Thyroid gland (tissue), 4 donors: ENCODE measurements at regions of chr10 and their contacts with region 1.

Region 1: DNA sequence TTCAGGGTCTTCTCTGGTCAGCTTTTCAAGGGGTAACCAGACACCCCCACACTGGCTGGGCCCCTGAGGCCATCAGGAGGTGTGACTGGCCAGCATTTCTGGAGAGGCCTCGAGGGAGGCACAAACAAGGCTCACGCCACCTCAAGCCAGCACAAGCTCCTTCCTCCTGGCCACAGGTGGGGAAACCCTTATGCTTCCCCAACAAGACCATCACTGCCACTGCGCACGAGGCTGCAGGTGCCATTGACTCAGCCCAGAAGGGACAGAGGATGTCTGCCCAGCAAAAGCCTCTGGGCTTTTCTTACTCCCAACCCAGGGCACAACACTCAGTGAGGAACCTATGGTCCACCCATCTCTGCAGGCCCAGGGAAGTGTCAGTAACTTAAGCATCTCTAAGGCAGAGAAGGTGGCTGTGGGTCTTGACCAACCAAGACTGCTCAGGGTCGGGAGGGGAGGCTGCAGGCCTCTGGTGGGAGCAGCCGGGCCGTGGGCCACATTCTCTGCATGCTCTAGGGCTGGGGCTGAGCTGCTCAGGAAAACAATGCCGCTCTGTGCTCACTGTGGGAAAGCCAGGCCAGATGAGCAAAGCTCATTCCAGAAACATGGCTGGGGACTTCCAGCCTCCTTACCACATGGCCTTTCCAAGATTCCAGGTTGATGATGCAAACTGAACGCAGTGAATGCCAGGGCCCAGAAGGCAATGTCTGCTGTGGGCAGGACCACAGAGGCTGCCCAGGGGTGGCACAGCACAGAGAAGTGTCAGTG is 24.2 kb upstream of the RASSF4 start:
- DNase-seq: no peak
- H3K4me3 ChIP-seq: no peak overlapping the region
- H3K27ac ChIP-seq: no peak overlapping the region
- H3K4me1 ChIP-seq: peaks cover 6 to 25% of the 10 kb centered on the region in 2 donors
- H3K27me3 ChIP-seq: no peaks in the 10 kb centered on the region
- CTCF ChIP-seq: no peak
- POLR2A ChIP-seq: no peak

Region 2: DNA sequence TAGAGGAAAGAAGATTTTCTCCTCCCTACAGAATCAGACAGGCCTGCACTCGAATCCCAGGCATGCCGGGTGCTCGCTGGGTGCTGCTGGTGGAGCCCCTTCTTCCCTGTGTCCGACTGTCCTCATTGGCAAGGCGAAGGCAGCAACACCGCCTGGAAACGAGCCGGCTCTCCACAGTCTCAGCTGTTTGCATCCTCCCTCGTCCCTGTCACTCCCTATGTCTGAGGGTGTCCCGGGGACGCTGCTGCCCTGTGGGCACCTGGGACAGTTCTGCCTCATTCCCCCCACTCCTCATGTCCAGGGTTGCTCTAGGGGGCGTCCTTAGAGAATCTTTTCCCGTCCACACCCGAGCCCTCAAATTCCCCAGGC is 55.9 kb before region 1 on chr10:
- intact Hi-C with region 1: no loop called
- DNase-seq: no peak
- H3K4me3 ChIP-seq: no peak overlapping the region
- H3K27ac ChIP-seq: no peak overlapping the region
- H3K4me1 ChIP-seq: peaks cover 20 to 32% of the 10 kb centered on the region in 2 donors
- H3K27me3 ChIP-seq: no peaks in the 10 kb centered on the region
- CTCF ChIP-seq: no peak
- POLR2A ChIP-seq: no peak

Region 3: DNA sequence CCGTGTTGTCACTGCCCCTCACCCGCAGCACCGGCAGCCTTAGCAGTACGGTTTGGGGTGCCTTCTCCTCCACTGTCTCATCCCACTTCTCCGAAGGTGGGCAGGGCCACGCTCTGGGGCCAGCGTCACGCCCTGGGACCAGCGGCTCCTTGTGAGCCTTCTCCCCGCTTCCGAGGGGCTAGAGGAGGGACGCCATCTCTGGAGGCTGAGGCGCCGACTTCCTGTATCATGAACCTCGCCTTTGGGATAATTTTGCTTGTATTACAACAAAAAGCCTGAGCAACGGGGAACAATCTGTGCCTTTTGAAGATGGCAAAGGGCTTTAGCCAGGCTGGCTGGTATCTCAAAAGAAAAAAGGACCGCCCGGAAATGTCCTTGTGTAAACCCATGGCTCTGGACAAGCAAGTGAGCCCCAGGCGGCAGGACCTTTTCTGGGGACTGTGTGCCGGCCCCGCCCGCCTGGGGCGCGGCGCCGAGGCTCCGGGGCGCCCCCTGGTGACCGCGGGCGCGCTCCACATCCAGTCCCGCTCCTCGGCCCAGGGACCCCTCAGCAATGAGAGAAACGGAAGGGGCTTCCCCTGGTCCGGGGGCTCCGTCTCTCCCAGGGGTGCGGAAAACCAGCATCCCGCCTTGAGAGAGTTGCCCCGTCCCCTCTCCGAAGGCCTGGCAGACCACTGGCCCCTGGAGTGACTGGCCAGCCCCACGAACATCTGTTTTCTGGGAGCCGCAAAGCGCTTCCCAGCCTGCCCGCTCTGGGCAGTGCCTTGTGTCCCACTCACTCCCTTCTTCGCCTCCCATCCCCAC is 39.4 kb after region 1 on chr10:
- intact Hi-C with region 1: loop called (anchors 2 kb)
- DNase-seq: peak; percentile 72 to 77
- H3K4me3 ChIP-seq: peak overlapping the region in 1 of 3 donors; percentile 65
- H3K27ac ChIP-seq: peak overlapping the region; percentile 79 to 97 (median 95)
- H3K4me1 ChIP-seq: peaks cover 66 to 83% of the 10 kb centered on the region in 2 donors
- H3K27me3 ChIP-seq: no peaks in the 10 kb centered on the region
- CTCF ChIP-seq: peak; percentile 60 to 98 (median 90)
- POLR2A ChIP-seq: peak in 1 of 2 donors; percentile 35

Region 4: GRCh38 chr10:44990302-44990655 is 54.9 kb after region 1 on chr10:
- intact Hi-C with region 1: no loop called
- DNase-seq: peak in 1 of 2 donors; percentile 2
- H3K4me3 ChIP-seq: no peak overlapping the region
- H3K27ac ChIP-seq: peak overlapping the region in 1 of 3 donors; percentile 43
- H3K4me1 ChIP-seq: peaks cover 6 to 63% of the 10 kb centered on the region in 2 donors
- H3K27me3 ChIP-seq: no peaks in the 10 kb centered on the region
- CTCF ChIP-seq: no peak
- POLR2A ChIP-seq: no peak